ENCODE measurements at regions of chr12 and their contacts with region 1.

Region 1: DNA sequence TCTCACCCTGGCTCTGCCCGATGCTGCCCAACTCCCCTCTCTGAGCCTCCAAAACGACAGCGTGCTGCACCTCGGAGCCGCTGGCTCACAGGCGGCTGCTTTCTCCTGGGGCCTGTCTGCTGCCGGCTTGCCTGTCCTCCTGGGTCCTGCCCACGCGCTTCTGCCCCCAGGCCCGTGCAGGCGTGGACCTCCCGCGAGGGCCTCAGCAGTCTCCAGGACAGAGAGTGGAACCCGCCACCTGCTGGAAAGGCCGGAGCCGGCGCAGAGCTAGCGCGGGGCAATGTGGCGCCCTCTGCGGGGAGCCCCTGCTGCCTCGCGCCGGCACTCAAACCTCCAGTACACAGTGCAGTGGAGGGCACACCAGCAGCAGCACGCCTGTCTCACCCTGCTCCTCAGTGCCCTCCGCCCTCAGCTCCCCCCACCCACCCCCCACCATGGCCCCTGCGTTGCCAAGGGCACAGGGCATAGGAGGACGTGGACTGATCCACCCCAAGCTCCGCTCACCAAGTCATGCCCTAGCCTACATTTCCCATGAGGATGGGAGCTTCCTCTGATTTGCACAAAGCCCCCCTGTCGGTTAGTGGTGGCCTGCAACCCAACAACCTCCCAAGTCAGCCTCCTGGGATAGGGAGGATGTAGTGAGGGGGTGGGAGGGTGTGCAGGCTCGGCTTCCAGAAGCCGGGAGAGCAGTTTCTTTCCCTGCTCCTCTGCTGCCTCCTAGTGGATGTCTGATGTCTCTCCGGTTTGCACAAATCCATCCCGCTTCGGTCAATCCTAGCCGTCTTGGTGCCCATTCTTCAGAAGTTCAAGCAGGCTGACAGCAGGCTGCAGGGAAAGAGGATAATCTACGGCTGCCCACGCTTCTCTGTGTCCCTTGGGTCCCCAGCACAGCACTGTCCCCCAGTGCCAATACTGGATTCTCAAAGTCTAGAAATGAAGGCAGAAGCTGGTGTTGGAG is 25.2 kb downstream of the KRT8 start:
- DNase-seq: peak; percentile 79
- H3K4me3 ChIP-seq: peak overlapping the region in 1 of 3 experiments; percentile 36
- H3K27ac ChIP-seq: peak overlapping the region; percentile 6
- H3K4me1 ChIP-seq: peaks cover 51% of the 10 kb centered on the region
- H3K27me3 ChIP-seq: no peaks in the 10 kb centered on the region
- CTCF ChIP-seq: peak; percentile 91 to 99

Region 2: GRCh38 chr12:52139552-52140062 is 740.1 kb before region 1 on chr12:
- CTCF ChIA-PET with region 1: interaction called, 7 read pairs
- dilution Hi-C with region 1: no loop called
- in situ Hi-C with region 1: loop called in 1 of 2 experiments (anchors 5 kb)
- intact Hi-C with region 1: loop called (anchors 1 kb)
- DNase-seq: peak; percentile 53
- H3K4me3 ChIP-seq: no peak overlapping the region
- H3K27ac ChIP-seq: no peak overlapping the region
- H3K4me1 ChIP-seq: peaks cover 15% of the 10 kb centered on the region
- H3K27me3 ChIP-seq: no peaks in the 10 kb centered on the region
- CTCF ChIP-seq: peak; percentile 98

Region 3: GRCh38 chr12:52243856-52244614 is 635.6 kb before region 1 on chr12:
- CTCF ChIA-PET with region 1: no interaction called
- dilution Hi-C with region 1: no loop called
- in situ Hi-C with region 1: loop called in 1 of 2 experiments (anchors 10 kb)
- intact Hi-C with region 1: no loop called
- DNase-seq: peak; percentile 96
- H3K4me3 ChIP-seq: no peak overlapping the region
- H3K27ac ChIP-seq: peak overlapping the region; percentile 72
- H3K4me1 ChIP-seq: peaks cover 52% of the 10 kb centered on the region
- H3K27me3 ChIP-seq: no peaks in the 10 kb centered on the region
- CTCF ChIP-seq: no peak

Region 4: GRCh38 chr12:52372216-52373154 is 507.2 kb before region 1 on chr12:
- CTCF ChIA-PET with region 1: interaction called, 9 read pairs
- dilution Hi-C with region 1: no loop called
- in situ Hi-C with region 1: loop called (anchors 5 kb)
- intact Hi-C with region 1: loop called (anchors 1 kb)
- DNase-seq: peak; percentile 81
- H3K4me3 ChIP-seq: no peak overlapping the region
- H3K27ac ChIP-seq: no peak overlapping the region
- H3K4me1 ChIP-seq: peaks cover 3% of the 10 kb centered on the region
- H3K27me3 ChIP-seq: no peaks in the 10 kb centered on the region
- CTCF ChIP-seq: peak; percentile 86 to 93

Region 5: DNA sequence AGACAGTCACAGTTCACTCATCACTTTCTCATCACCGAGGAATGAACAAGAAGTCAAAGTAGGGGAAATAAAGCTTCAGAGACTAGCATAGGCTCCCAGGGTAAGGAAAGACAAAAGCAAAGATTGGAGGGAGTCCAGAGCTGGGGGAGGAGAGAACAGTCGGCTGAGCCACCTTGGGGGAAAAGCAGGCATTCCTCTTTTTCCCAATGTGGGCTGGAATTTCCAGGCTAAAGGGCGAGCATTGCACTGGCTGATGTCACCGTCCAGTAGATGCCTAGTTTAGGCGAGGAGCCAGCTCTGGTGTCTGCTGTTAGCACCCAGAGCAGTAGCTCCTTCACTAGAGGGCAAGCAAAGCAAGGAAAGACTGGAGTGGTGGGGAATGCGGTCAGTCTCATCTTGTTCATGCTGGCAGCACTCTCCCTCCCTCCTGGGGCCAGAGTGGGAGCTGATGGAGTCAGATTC is 437.0 kb before region 1 on chr12:
- CTCF ChIA-PET with region 1: no interaction called
- dilution Hi-C with region 1: no loop called
- in situ Hi-C with region 1: loop called in 1 of 2 experiments (anchors 5 kb)
- intact Hi-C with region 1: loop called (anchors 1 kb)
- DNase-seq: peak; percentile 98
- H3K4me3 ChIP-seq: no peak overlapping the region
- H3K27ac ChIP-seq: peak overlapping the region; percentile 98
- H3K4me1 ChIP-seq: peaks cover 67% of the 10 kb centered on the region
- H3K27me3 ChIP-seq: no peaks in the 10 kb centered on the region
- CTCF ChIP-seq: peak; percentile 37 to 60

Region 6: GRCh38 chr12:52582971-52583456 is 296.7 kb before region 1 on chr12:
- CTCF ChIA-PET with region 1: interaction called, 6 read pairs
- dilution Hi-C with region 1: no loop called
- in situ Hi-C with region 1: loop called (anchors 5 kb)
- intact Hi-C with region 1: loop called (anchors 1 kb)
- DNase-seq: peak; percentile 87
- H3K4me3 ChIP-seq: no peak overlapping the region
- H3K27ac ChIP-seq: peak overlapping the region; percentile 68
- H3K4me1 ChIP-seq: peaks cover 53% of the 10 kb centered on the region
- H3K27me3 ChIP-seq: no peaks in the 10 kb centered on the region
- CTCF ChIP-seq: peak; percentile 75 to 88

Region 7: DNA sequence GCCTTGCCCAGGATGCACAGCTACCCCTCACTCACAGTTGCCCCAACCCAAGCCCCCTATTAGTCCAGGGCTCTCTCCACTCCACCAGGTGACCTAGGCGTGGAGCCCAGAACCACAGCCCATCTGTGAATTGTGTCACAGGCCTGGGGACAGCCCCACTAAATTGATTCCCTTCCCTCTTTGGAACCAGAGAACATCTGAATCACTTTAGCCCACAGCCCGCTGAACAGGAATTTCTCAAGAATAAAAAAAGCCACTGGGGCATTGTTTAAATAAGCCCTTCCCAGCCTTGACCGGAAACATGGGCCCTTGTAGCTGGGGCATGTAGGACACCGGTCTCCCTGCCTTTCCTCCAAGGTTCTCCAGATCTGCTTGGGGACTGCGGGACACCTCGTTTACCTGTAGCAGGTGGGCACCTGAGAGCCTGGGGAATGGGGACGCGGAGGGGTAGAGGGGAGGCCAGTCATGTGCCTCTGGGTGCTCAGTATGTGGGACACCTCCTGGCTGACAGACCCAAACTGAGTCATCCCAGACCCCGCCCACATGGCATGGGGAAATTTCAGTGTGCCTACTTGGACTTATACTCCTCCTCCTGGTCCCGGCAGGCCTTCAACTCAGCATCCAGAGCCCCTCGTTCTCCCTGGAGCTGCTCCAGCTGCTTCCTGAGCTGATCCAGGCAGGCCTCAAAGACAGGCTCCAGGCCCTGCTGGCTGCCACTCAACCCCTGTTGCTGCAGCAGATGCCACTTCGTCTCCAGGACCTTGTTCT is 32.2 kb before region 1 on chr12:
- CTCF ChIA-PET with region 1: interaction called, 22 read pairs
- dilution Hi-C with region 1: no loop called
- in situ Hi-C with region 1: no loop called
- intact Hi-C with region 1: no loop called
- DNase-seq: peak; percentile 24
- H3K4me3 ChIP-seq: no peak overlapping the region
- H3K27ac ChIP-seq: no peak overlapping the region
- H3K4me1 ChIP-seq: no peaks in the 10 kb centered on the region
- H3K27me3 ChIP-seq: no peaks in the 10 kb centered on the region
- CTCF ChIP-seq: no peak